ENCODE measurements at regions of chr1 and their contacts with region 1.

Region 1: GRCh38 chr1:17661546-17662157 is 93.5 kb upstream of the ACTL8 start:
- ATAC-seq: peak; percentile 54 to 88 (median 80)
- H3K4me3 ChIP-seq: no peak overlapping the region
- H3K27ac ChIP-seq: no peak overlapping the region
- H3K4me1 ChIP-seq: no peaks in the 10 kb centered on the region

Region 2: GRCh38 chr1:17141441-17142197 is 520.0 kb before region 1 on chr1:
- in situ Hi-C with region 1: no loop called
- ATAC-seq: no peak
- H3K4me3 ChIP-seq: no peak overlapping the region
- H3K27ac ChIP-seq: no peak overlapping the region
- H3K4me1 ChIP-seq: no peaks in the 10 kb centered on the region

Region 3: DNA sequence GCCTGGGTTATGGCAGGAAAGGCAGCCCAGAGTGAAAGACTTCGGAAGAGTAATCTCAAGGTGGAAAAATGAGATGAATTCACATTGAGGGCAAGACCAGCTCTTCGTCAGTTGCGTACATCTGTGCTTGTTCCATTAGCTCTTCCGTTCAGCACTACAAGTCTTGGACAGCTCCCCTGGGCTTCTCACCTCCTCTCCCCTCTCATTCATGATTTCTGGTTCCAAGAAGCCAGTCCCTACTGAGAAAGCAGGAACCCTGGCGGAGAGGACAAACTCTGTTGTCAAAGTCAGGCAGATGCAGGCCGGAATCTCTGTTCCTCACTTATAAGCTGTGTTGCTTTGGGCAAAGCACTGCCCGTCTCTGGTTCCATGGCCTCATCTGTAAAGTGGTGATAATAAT is 170.0 kb after region 1 on chr1:
- in situ Hi-C with region 1: loop called in 1 of 9 experiments (anchors 10 kb)
- ATAC-seq: peak in 3 of 8 experiments; percentile 47 to 55 (median 50)
- H3K4me3 ChIP-seq: no peak overlapping the region
- H3K27ac ChIP-seq: no peak overlapping the region
- H3K4me1 ChIP-seq: peaks cover 8 to 11% of the 10 kb centered on the region in 2 donors

Region 4: GRCh38 chr1:18100491-18101063 is 438.9 kb after region 1 on chr1:
- in situ Hi-C with region 1: loop called in 3 of 9 experiments (anchors 10 to 25 kb)
- ATAC-seq: peak; percentile 25 to 79 (median 68)
- H3K4me3 ChIP-seq: no peak overlapping the region
- H3K27ac ChIP-seq: no peak overlapping the region
- H3K4me1 ChIP-seq: peaks cover 0 to 9% of the 10 kb centered on the region in 2 donors

Region 5: DNA sequence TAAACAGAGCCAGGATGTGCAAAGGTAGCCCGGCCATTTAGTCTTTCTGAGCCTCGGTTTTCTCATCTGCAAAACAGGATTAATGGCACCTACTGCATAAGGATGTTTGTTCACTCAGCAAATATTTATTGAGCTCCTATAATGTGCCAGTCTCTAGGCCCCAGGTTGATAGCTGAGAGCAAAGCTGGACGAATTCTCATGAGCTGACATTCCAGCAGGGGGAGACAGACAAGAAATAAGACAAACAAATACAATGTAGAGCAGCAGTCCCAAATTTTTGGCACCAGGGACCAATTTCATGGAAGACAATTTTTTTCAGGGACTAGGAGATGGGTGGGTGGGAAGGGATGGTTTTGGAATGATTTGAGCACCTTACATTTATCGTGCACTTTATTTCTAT is 894.7 kb after region 1 on chr1:
- in situ Hi-C with region 1: loop called in 1 of 9 experiments (anchors 25 kb)
- ATAC-seq: peak in 2 of 8 experiments; percentile 20 to 66
- H3K4me3 ChIP-seq: no peak overlapping the region
- H3K27ac ChIP-seq: no peak overlapping the region
- H3K4me1 ChIP-seq: peaks cover 10 to 21% of the 10 kb centered on the region in 2 donors